Endothelial cell of umbilical vein (primary cell): ENCODE measurements at regions of chr20 and their contacts with region 1.

Region 1: GRCh38 chr20:50594591-50595432 is 84.6 kb downstream of the PTPN1 start:
- DNase-seq: no peak
- H3K4me3 ChIP-seq: no peak overlapping the region
- H3K27ac ChIP-seq: no peak overlapping the region
- H3K4me1 ChIP-seq: peaks cover 10% of the 10 kb centered on the region
- H3K27me3 ChIP-seq: peaks cover 0 to 2% of the 10 kb centered on the region in 2 experiments
- CTCF ChIP-seq: no peak
- POLR2A ChIP-seq: no peak

Region 2: DNA sequence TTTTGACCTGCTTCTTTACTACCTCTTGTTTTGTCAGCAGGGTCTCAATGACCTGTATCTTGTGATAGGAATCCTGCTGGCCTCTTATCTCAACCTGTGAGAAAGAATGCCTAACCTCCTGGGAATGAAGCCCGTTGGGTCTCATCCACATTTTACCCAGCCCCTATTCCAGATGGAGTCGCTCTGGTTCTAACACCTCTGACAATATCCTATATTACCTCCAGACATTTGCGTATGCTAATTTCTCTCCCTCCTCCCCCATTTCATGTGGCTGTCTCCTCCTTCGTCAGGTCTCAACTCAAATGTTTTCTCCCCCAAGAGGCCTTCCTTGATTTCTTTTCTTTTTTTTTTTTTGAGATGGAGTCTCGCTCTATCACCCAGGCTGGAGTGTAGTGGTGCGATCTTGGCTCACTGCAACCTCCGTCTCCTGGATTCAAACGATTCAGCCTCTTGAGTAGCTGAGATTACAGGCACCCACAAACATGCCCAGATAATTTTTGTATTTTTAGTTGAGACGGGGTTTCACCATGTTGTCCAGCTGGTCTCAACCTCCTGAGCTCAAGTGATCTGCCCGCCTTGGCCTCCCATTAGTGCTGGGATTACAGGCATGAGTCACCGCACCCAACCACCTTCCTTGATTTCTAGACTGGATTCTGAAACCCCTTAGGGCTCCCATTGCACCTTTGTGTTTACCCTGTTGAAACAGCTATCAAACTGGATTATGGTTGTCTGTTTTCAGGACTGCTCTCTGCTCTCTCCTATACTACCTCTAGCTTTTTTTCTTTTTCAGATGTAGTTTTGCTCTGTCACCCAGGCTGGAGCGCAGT is 831.7 kb before region 1 on chr20:
- CTCF ChIA-PET with region 1: no interaction called
- POLR2A ChIA-PET with region 1: no interaction called
- dilution Hi-C with region 1: no loop called
- intact Hi-C with region 1: no loop called
- DNase-seq: no peak
- H3K4me3 ChIP-seq: no peak overlapping the region
- H3K27ac ChIP-seq: no peak overlapping the region
- H3K4me1 ChIP-seq: peaks cover 3% of the 10 kb centered on the region
- H3K27me3 ChIP-seq: peaks cover 0 to 2% of the 10 kb centered on the region in 2 experiments
- CTCF ChIP-seq: no peak
- POLR2A ChIP-seq: no peak

Region 3: GRCh38 chr20:50744143-50744792 is 149.5 kb after region 1 on chr20:
- CTCF ChIA-PET with region 1: interaction called, 19 read pairs
- POLR2A ChIA-PET with region 1: no interaction called
- dilution Hi-C with region 1: no loop called
- intact Hi-C with region 1: loop called (anchors 10 kb)
- DNase-seq: peak; percentile 42
- H3K4me3 ChIP-seq: no peak overlapping the region
- H3K27ac ChIP-seq: no peak overlapping the region
- H3K4me1 ChIP-seq: peaks cover 9% of the 10 kb centered on the region
- H3K27me3 ChIP-seq: no peaks in the 10 kb centered on the region
- CTCF ChIP-seq: no peak
- POLR2A ChIP-seq: no peak